Right ventricle myocardium superior (tissue), 1 donor: ENCODE measurements at regions of chr1 and their contacts with region 1.

Region 1: DNA sequence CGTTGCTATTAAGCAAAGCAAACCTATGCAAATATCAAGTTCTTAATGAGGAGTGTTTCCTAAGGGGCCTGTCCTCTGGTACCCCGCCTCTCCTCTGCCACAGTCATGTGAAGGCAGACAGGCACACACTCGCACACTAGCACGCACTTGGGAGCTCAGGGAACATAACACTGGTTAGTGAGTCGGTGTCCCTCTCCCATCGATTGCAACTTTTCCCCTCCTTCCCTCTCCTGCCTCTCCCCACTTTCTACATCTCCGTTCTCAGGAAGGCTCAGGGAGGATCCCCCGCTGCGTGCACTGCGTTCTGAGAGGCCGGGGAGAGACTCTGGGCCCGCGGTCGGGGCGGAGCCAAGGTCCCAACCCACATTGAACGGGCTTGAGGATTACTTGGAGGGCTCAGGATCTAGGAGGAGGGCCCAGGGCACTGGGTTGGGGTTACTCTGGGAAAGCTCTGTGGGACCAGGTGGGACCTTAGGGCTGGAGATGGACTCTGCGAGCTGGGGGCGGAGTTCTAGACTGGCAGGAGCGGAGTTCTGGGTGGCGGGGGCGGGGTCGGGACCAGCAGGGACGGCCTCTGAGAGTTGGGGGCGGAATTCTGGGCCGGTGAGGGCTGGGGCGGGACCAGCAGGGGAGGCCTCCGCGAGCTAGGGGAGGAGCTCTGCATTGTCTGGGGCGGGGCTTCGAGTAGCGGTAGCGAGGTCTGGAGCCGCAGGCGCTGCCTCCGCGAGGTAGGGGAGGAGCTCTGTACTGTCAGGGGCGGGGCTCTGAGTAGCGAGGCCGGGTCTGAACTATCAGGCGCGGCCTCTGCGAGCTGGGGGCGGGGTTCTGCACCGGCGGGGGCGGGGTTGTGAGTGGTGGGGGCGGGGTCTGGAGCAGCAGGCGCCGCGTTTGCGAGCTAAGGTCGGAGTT is 533 bp upstream of the LEPR start:
- DNase-seq: peak; percentile 99
- ATAC-seq: peak; percentile 96

Region 2: GRCh38 chr1:65067491-65068201 is 352.3 kb before region 1 on chr1:
- intact Hi-C with region 1: loop called (anchors 10 kb)
- DNase-seq: peak; percentile 79
- ATAC-seq: peak; percentile 40

Region 3: GRCh38 chr1:65346190-65346589 is 73.7 kb before region 1 on chr1:
- intact Hi-C with region 1: no loop called
- DNase-seq: no peak
- ATAC-seq: no peak